ENCODE measurements at regions of chr2 and their contacts with region 1.

Region 1: DNA sequence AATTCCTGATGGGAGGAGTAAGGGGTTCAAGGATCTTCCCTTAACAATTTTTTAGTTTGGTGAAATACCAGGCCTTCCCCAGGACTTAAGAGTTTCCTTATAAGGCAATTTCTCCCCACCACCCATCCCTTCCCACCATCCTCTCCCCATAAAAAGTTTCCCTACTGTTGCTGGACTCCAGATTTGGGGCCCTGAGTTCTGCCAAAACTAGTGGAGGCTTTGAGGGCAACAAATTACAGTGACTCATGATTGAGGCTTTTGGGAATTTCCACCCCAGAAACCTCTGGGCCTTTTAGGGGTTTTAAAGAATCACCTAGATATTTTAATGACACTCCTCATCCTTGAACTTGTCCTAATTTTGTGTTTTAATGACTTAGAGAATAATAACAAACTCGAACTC is 14.3 kb upstream of the EN1 start:
- DNase-seq: no peak
- H3K4me3 ChIP-seq: no peak overlapping the region
- H3K27ac ChIP-seq: no peak overlapping the region
- H3K4me1 ChIP-seq: peaks cover 0 to 4% of the 10 kb centered on the region in 2 donors
- H3K27me3 ChIP-seq: peaks cover 28% of the 10 kb centered on the region
- CTCF ChIP-seq: no peak
- POLR2A ChIP-seq: no peak

Region 2: DNA sequence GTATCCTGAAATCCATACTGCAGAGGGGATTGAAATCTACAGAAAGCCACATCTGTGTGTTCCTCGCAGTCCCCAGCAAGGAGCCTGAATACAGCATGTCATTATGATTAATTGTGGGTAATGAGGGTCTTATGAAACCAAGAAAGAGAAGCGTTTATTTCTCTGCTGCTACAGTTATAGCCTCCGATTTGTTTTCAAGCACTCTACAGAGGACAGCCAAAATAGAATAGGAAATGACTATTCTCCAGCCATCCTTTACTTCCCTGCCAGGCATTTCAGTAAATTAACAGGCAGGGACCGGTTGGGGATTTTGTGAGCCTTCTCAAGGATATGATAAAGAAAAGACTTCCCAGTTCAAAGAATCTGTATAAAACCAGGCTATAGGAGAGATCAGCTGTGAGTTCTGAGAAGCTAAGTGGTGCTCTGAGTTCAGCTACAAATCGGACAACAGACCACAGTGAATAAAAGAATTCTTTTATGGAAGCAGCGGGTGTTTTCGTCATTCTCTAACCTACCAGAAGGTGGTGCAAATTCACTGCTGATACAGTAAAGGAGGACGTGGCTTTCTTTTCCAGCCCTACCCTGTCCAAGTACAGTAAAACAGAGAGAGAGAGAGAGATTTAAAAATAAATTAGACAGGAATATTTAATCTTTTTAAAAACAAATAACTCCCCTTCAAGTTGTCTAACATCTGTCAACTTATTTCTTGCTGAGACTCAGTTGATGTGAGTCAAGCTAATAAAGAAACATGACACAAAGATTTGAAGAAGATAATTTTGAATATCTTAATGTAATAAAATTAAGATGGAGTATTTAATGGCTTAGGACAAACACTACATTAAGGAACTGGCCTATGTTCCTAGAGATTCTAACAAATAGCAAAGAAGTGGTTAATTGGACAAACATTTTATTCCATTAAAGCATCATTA is 639.8 kb before region 1 on chr2:
- intact Hi-C with region 1: loop called (anchors 5 kb)
- DNase-seq: peak; percentile 18 to 31
- H3K4me3 ChIP-seq: no peak overlapping the region
- H3K27ac ChIP-seq: no peak overlapping the region
- H3K4me1 ChIP-seq: peaks cover 0 to 14% of the 10 kb centered on the region in 2 donors
- H3K27me3 ChIP-seq: peaks cover 39% of the 10 kb centered on the region
- CTCF ChIP-seq: peak in 5 of 6 experiments; percentile 36 to 72 (median 58)
- POLR2A ChIP-seq: no peak